Tibial artery (tissue), 4 donors: ENCODE measurements at regions of chr5 and their contacts with region 1.

Region 1: DNA sequence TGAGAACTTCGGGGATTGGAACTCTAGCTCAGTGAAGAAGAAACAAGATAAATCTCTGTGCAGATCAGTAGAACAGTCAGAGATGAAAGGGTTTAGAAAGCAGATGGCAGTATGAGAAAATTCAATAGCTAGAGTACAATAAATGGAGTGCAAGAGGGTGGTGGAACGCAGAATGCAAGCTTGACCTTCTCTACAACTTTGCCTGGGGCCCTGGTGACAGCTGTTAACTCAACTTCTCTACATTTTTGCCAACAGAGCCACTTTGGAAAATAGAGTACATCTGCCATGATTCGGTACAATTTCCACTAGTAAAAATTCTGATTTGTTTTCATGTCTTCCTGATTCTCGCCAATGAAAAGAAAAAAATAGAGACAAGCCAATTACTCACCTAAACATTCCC is 175.7 kb downstream of the SNCAIP start:
- DNase-seq: no peak
- H3K4me3 ChIP-seq: no peak overlapping the region
- H3K27ac ChIP-seq: no peak overlapping the region
- H3K4me1 ChIP-seq: no peaks in the 10 kb centered on the region
- H3K27me3 ChIP-seq: no peaks in the 10 kb centered on the region
- CTCF ChIP-seq: no peak

Region 2: GRCh38 chr5:122500245-122501075 is 12.7 kb after region 1 on chr5:
- intact Hi-C with region 1: loop called (anchors 1 kb)
- DNase-seq: peak; percentile 52 to 74
- H3K4me3 ChIP-seq: peak overlapping the region; percentile 14 to 29
- H3K27ac ChIP-seq: peak overlapping the region; percentile 61 to 70
- H3K4me1 ChIP-seq: peaks cover 0 to 31% (median 13%) of the 10 kb centered on the region in 4 donors
- H3K27me3 ChIP-seq: no peaks in the 10 kb centered on the region
- CTCF ChIP-seq: peak; percentile 43 to 57